ENCODE measurements at regions of chr13 and their contacts with region 1.

Region 1: DNA sequence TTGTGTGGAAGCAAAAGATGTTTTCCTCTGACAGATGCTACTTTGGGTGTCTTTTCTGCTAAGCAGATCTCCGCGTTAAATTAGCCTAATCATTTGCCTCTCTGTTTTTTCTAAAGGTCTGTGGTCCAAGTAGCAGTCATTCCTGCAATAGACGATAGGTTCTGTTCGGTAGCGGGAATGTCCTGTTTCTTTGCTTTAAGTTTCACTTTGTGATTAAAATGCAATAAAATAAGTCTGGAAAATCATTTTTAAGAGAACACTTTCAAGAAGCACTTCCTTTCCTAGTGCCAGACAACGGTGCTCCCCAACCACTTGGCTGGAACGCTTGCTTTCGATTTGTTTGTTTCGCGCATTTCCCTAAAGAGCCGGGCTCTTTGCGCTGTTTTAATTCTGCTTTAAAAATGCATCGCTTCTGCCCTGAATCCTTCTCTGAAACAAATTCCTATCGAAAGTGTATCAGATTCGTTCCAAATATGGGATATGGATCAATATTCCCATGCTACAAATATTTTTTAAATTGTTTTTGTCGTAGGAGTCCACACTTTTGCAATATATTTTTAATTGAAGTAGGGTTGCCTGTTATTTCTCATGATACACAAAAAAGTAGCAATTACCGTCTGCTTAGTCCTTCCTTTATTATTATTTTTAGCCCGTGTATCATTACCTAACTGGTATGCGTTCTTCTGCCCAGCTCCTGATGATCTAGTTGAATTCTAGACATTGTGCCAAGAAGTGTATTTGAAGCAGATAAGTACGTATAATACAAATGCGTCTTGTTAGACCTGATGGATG is 14.2 kb downstream of the ZIC2 start:
- DNase-seq: peak in 1 of 2 donors; percentile 40
- ATAC-seq: no peak
- H3K4me3 ChIP-seq: no peak overlapping the region
- H3K4me3 Mint-ChIP-seq: peak overlapping the region; percentile 38
- H3K27ac ChIP-seq: no peak overlapping the region
- H3K27ac Mint-ChIP-seq: no peak overlapping the region
- H3K4me1 ChIP-seq: peaks cover 6% of the 10 kb centered on the region
- H3K4me1 Mint-ChIP-seq: peaks cover 5 to 21% of the 10 kb centered on the region in 2 donors
- H3K27me3 ChIP-seq: peaks cover 76% of the 10 kb centered on the region
- H3K27me3 Mint-ChIP-seq: peaks cover 77 to 78% of the 10 kb centered on the region in 2 donors
- CTCF ChIP-seq: no peak

Region 2: DNA sequence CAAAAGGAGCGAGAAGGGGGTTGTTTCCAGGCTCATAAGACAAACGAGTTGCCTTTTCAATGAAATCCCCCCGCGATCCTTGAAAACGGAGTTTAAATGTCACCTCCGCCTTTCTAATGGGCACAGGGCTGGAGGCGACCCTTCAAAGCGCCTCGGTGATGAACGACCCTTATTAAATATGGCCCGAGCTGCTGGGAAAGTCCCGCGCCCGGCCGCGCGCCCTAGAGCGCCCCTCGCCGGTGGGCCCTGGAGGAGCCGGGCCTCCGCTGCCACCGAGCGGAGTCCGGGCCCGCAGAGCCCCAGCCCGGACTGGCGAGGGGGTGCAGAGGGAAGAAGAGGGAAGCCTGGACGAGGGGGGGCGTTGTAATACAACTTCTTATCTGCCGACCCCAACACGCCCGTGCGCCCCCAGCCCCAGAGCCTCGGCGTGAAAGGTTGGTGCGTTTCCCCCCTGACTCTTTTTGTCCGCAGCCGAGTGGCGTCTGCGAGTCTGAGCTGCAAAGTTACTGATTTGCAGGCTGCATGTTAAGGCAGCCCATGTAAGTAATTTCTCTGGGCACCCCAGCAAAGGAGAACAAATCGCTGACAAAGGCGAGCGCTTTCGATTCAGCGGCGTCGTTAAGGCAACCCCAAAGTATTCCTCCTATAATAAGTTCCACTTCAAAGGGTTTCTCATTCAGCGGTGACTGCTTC is 36.1 kb before region 1 on chr13:
- intact Hi-C with region 1: loop called (anchors 5 kb)
- DNase-seq: peak in 1 of 2 donors; percentile 57
- ATAC-seq: no peak
- H3K4me3 ChIP-seq: no peak overlapping the region
- H3K4me3 Mint-ChIP-seq: peak overlapping the region; percentile 31
- H3K27ac ChIP-seq: no peak overlapping the region
- H3K27ac Mint-ChIP-seq: no peak overlapping the region
- H3K4me1 ChIP-seq: peaks cover 32% of the 10 kb centered on the region
- H3K4me1 Mint-ChIP-seq: peaks cover 10 to 21% of the 10 kb centered on the region in 2 donors
- H3K27me3 ChIP-seq: peaks cover 71% of the 10 kb centered on the region
- H3K27me3 Mint-ChIP-seq: peaks cover 64 to 70% of the 10 kb centered on the region in 2 donors
- CTCF ChIP-seq: no peak

Measured in natural killer cell (primary cell).